ENCODE measurements at regions of chr20 and their contacts with region 1.

Region 1: DNA sequence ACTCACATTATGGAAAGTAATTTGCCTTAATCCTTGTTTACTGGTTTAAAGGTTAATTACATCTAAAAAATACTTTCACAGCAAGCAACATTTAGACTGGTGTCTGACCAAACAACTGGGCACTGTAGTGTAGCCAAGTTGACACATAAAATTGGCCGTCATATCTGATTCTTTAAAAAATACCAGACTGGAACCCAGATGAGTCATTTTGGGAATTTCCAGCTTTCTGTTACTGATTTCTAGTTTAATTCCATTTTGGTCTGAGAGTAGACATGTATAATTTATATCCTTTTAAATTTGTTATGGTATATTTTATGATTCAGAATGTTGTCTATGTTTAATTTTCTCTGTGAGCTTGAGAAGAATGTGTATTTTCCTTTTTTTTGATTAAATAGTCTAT is 44.1 kb downstream of the SCP2D1 start:
- DNase-seq: no peak
- ATAC-seq: no peak
- H3K4me3 ChIP-seq: no peak overlapping the region
- H3K27ac ChIP-seq: peak overlapping the region in 1 of 2 donors; percentile 16
- H3K4me1 ChIP-seq: peaks cover 2 to 16% of the 10 kb centered on the region in 2 donors
- H3K27me3 ChIP-seq: no peaks in the 10 kb centered on the region

Region 2: DNA sequence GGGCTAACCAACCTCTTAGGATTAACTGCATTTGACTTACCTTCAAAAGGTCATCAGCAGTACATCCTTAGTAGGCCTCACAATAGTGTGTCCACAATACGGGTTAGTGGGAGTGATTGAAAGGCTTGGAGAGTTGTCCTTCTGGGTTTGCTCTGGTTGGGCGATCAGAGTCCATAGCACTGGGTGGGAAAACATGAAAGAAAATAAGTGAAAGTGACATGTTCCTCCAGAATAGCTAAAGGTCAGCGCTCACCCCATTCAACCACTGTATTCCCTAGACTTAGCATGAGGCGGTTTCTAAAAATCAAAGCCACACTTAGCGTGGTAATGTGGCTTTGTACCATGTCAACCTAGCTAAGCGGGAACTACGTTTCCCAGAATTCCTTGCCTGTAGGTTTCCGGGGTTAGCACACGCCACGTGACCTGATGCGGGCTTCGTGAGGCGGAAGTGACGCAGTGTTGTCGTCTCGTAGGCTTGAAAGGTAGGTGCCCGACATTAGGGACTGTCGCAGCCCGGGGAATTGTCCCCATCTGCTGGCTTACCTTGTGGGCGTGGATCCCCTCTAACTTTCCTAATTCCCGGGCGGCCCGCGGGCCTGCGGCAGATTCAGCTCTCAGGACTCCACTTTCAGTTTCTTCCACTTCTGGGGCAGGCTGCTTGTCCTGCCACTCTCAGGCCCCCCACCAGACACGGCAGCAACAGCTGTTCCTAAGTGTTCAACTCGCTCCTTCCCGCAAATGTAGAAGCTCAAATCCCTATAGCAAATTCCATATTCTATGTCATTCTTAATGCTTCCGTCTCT is 63.8 kb before region 1 on chr20:
- intact Hi-C with region 1: loop called in 1 of 2 experiments (anchors 5 kb)
- DNase-seq: peak; percentile 94 to 95
- ATAC-seq: peak; percentile 95
- H3K4me3 ChIP-seq: peak overlapping the region; percentile 41 to 79
- H3K27ac ChIP-seq: peak overlapping the region; percentile 52 to 69
- H3K4me1 ChIP-seq: peaks cover 4 to 5% of the 10 kb centered on the region in 2 donors
- H3K27me3 ChIP-seq: no peaks in the 10 kb centered on the region